ENCODE measurements at regions of chr14 and their contacts with region 1.

Region 1: DNA sequence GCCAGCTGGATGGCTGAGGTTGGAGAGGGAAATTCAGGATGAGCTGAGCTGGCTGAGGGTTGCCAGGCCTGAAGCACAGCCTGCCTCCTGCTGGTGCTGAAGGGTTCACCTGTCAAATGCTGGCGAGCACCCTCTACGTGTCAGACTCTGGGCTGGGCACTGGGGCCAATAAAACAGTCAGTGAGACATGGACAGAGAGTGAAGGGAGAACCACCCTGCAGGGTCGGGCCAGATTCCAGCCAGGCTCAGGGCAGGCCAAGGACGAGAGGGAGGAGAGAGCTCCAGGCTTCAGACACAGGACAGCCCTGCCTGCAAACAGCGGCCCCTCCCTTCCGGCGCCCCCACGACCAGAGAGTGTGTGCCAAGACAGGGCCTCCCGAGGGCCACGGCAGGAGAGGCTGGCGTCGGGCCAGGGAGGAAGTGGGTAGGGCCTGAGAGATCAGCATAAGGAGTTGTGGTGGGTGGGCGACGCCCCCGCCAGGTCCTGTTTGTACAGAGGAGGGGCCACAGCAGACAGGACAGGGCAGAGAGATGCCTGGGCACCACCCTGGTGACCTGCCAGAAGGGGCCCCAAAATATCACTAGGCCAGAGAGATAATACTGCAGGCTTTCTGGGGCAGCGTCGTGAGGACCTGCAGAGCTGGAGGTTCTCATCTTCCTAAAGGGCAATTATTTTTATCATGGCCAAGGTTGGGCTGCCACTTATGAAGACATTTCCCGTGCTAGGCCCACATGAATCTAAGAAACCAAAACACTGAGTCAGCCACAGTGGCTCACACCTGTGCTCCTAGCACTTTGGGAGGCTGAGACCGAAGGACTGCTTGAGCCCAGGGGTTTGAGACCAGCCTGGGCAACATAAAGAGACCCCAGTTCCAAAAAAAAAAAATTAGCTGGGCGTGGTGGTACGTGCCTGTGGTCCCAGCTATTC is 73.1 kb upstream of the GPR68 start:
- DNase-seq: peak; percentile 62
- ATAC-seq: peak; percentile 32
- H3K4me3 Mint-ChIP-seq: peak overlapping the region; percentile 70
- H3K27ac Mint-ChIP-seq: peak overlapping the region; percentile 98
- H3K4me1 Mint-ChIP-seq: peaks cover 78% of the 10 kb centered on the region
- H3K27me3 Mint-ChIP-seq: no peaks in the 10 kb centered on the region
- CTCF ChIP-seq: no peak

Region 2: GRCh38 chr14:90355540-90356518 is 961.8 kb before region 1 on chr14:
- CTCF ChIA-PET with region 1: no interaction called
- POLR2A ChIA-PET with region 1: no interaction called
- intact Hi-C with region 1: no loop called
- DNase-seq: no peak
- ATAC-seq: no peak
- H3K4me3 Mint-ChIP-seq: no peak overlapping the region
- H3K27ac Mint-ChIP-seq: no peak overlapping the region
- H3K4me1 Mint-ChIP-seq: no peaks in the 10 kb centered on the region
- H3K27me3 Mint-ChIP-seq: peaks cover 9% of the 10 kb centered on the region
- CTCF ChIP-seq: no peak

Region 3: DNA sequence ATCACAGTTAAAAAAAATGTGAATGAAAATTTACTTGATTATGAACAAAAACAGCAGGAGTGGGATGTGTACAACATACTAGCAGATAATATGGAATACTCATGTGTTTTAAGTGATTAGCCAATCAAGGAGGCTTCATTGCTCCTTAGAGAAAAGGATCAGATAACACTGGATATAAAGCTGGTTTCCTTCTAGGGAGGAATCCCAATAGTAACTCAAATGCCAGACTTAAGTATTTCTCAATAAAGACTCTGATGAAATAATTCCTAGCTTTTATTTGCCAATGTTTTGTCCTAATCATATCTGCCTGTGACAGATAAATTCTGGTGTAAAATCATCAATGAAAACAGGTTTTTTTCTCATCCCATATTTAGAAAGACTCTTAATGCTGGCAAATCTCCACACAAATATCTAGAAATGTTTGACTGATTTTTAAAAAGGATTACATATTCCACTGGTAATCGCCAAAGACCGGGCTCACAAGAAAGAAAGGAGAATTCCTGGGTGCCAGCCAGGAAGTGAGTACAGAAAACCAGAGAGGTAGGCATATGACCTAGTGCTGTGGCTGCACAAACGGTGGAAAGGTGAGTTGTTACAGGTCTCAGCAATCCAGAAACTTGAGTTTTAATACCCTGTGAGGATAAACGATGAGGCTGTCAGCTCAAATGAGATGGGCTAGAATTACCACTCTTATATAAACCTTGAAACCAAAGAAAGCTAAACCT is 392.9 kb before region 1 on chr14:
- CTCF ChIA-PET with region 1: no interaction called
- POLR2A ChIA-PET with region 1: no interaction called
- intact Hi-C with region 1: no loop called
- DNase-seq: no peak
- ATAC-seq: no peak
- H3K4me3 Mint-ChIP-seq: no peak overlapping the region
- H3K27ac Mint-ChIP-seq: no peak overlapping the region
- H3K4me1 Mint-ChIP-seq: no peaks in the 10 kb centered on the region
- H3K27me3 Mint-ChIP-seq: no peaks in the 10 kb centered on the region
- CTCF ChIP-seq: no peak

Region 4: GRCh38 chr14:91223028-91223783 is 94.4 kb before region 1 on chr14:
- CTCF ChIA-PET with region 1: no interaction called
- POLR2A ChIA-PET with region 1: no interaction called
- intact Hi-C with region 1: no loop called
- DNase-seq: no peak
- ATAC-seq: no peak
- H3K4me3 Mint-ChIP-seq: no peak overlapping the region
- H3K27ac Mint-ChIP-seq: peak overlapping the region; percentile 50
- H3K4me1 Mint-ChIP-seq: peaks cover 33% of the 10 kb centered on the region
- H3K27me3 Mint-ChIP-seq: no peaks in the 10 kb centered on the region
- CTCF ChIP-seq: no peak

Region 5: GRCh38 chr14:91350813-91351511 is 33.3 kb after region 1 on chr14:
- CTCF ChIA-PET with region 1: interaction called, 23 read pairs
- POLR2A ChIA-PET with region 1: interaction called, 24 read pairs
- intact Hi-C with region 1: no loop called
- DNase-seq: no peak
- ATAC-seq: peak; percentile 60
- H3K4me3 Mint-ChIP-seq: peak overlapping the region; percentile 81
- H3K27ac Mint-ChIP-seq: peak overlapping the region; percentile 85
- H3K4me1 Mint-ChIP-seq: peaks cover 93% of the 10 kb centered on the region
- H3K27me3 Mint-ChIP-seq: no peaks in the 10 kb centered on the region
- CTCF ChIP-seq: no peak

Region 6: DNA sequence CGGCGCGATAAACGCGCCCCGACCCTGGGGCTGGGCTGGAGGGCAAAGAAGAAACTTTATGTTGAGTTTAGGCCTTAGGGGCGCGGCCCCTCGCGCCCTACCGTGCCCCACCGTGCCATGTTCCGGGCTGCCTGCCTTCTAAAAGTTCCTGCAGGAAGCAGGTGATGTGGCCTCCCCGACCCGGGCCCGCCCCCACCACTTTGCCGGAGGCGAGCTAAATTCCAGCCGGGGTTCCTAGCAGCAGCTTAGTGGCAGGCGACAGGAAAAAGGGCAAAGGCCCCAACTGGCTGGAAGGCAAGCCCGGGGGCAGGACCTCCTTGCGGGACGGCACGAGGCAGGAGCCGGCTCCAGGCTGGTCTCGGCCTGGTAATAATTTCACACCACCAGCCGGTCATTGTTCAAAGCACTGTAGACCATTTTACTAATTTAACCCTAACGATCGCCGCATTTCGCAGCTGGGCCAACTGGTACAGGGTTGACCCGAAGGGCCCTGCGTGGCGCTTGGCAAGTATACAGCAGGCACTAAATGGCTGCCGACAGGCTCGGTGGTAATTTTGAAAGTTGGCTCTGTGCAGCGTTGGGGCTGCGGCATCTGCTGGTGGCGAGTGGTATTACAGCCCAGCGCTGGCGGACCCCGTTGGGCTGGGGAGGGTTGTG is 100.9 kb after region 1 on chr14:
- CTCF ChIA-PET with region 1: interaction called, 131 read pairs
- POLR2A ChIA-PET with region 1: interaction called, 150 read pairs
- intact Hi-C with region 1: loop called (anchors 1 kb)
- DNase-seq: peak; percentile 84
- ATAC-seq: peak; percentile 37
- H3K4me3 Mint-ChIP-seq: peak overlapping the region; percentile 81
- H3K27ac Mint-ChIP-seq: peak overlapping the region; percentile 93
- H3K4me1 Mint-ChIP-seq: peaks cover 42% of the 10 kb centered on the region
- H3K27me3 Mint-ChIP-seq: no peaks in the 10 kb centered on the region
- CTCF ChIP-seq: peak; percentile 36